CD4-positive, alpha-beta memory T cell (primary cell): ENCODE measurements at regions of chr11 and their contacts with region 1.

Region 1: DNA sequence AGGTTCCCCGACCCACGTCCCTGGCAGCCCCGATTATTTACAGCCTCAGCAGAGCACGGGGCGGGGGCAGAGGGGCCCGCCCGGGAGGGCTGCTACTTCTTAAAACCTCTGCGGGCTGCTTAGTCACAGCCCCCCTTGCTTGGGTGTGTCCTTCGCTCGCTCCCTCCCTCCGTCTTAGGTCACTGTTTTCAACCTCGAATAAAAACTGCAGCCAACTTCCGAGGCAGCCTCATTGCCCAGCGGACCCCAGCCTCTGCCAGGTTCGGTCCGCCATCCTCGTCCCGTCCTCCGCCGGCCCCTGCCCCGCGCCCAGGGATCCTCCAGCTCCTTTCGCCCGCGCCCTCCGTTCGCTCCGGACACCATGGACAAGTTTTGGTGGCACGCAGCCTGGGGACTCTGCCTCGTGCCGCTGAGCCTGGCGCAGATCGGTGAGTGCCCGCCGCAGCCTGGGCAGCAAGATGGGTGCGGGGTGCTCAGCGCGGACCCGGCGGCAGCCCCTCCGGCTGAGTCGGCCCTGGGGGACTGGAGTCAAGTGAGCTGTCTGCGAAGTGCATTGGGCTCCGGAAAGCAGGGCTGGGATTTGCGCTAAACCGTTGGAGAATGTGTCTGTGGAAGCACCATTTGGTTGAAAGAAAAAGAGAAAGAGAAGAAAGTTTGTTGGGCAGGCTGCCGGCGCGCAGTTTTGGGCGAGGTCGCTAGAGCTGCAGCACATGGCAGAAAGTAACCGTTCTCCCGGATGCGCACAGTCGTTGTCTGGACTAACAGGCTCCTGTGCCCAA is at the start of gene CD44:
- DNase-seq: peak; percentile 78 to 93 (median 83)
- H3K4me3 ChIP-seq: peak within 1 kb of the TSS; percentile 84 to 99
- H3K4me3 Mint-ChIP-seq: peak within 1 kb of the TSS; percentile 95 to 99 (median 98)
- H3K27ac ChIP-seq: peak within 1 kb of the TSS; percentile 98
- H3K27ac Mint-ChIP-seq: peak within 1 kb of the TSS; percentile 93 to 99 (median 98)
- H3K4me1 ChIP-seq: peaks cover 42% of the 10 kb centered on the region
- H3K4me1 Mint-ChIP-seq: peaks cover 36 to 64% (median 44%) of the 10 kb centered on the region in 4 donors
- H3K27me3 ChIP-seq: no peaks in the 10 kb centered on the region
- H3K27me3 Mint-ChIP-seq: no peaks in the 10 kb centered on the region
- total RNA-seq, gene CD44: 808 to 809 TPM

Region 2: DNA sequence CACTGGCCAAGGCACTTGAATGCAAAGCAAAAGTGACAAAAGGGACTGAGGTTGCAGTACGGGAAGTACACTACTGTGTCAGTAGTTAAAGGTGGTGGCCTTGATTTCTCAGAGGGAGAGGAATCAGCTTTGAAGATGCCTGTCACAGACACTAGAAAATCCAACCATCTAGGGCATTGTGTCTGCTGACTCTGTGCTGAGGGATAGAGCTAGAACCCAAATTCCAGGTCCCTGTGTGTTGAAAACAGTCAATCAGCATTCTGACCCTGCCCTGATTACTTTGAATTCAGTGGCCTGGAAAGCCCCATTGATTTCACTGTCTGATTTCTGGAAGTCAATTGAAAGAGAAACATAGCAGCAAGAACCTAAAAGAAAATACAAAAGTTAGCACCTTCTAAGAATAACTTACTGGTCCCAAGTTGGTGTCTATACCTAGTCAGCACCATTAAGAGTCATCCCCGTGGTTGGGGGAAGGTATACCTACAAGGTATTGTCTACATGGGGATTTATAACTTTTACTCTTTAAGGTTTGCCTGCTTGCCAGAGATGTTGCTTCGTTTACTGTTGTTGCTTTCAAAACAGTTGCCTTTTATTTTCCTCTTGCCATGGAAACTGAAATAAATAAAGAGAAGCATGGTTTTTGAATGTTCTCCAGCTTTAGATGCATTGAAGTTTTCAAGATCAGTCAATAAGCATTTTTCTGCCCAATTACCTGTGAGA is 125.5 kb before region 1 on chr11:
- CTCF ChIA-PET with region 1: no interaction called
- POLR2A ChIA-PET with region 1: interaction called, 25 read pairs
- intact Hi-C with region 1: loop called (anchors 1 kb)
- DNase-seq: peak; percentile 61 to 87 (median 75)
- H3K4me3 ChIP-seq: no peak overlapping the region
- H3K4me3 Mint-ChIP-seq: peak overlapping the region; percentile 11 to 87 (median 71)
- H3K27ac ChIP-seq: peak overlapping the region; percentile 70
- H3K27ac Mint-ChIP-seq: peak overlapping the region; percentile 93 to 100 (median 97)
- H3K4me1 ChIP-seq: peaks cover 26% of the 10 kb centered on the region
- H3K4me1 Mint-ChIP-seq: peaks cover 23 to 57% (median 37%) of the 10 kb centered on the region in 4 donors
- H3K27me3 ChIP-seq: no peaks in the 10 kb centered on the region
- H3K27me3 Mint-ChIP-seq: no peaks in the 10 kb centered on the region

Region 3: DNA sequence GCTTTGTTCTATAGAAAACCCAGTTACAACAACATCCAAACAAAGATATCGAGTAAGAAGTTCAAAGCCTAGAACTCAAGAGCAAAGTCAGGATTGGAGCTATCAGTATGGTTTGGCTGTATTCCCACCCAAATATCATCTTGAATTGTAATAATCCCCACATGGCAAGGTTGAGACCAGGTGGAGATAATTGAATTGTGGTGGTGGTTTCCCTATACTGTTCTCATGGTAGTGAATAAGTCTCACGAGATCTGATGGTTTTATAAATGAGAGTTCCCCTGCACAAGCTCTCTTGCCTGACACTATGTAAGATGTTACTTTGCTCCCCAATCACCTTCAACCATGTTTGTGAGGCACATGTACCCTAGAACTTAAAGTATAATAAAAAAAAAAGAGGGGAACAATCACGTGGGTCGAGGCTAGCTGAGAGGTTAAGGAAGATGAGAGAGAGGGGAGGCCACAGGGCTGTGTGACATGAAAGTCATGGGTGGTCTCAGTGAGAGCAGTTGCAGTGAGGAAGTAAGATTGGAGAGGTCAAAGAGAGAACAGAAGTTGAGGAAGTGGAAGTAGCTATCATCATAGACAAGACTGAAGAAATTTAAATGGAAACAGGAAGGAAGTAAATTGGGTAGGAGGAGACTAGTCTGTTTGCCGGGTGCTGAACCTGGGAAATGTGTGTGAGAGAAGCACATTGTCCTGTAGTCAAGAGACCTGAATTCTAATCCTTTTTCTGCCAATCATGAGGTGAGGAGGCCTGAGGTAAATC is 80.3 kb before region 1 on chr11:
- CTCF ChIA-PET with region 1: no interaction called
- POLR2A ChIA-PET with region 1: interaction called, 12 read pairs
- intact Hi-C with region 1: no loop called
- DNase-seq: no peak
- H3K4me3 ChIP-seq: no peak overlapping the region
- H3K4me3 Mint-ChIP-seq: peak overlapping the region in 7 of 8 donors; percentile 1 to 71 (median 14)
- H3K27ac ChIP-seq: no peak overlapping the region
- H3K27ac Mint-ChIP-seq: peak overlapping the region; percentile 19 to 90 (median 78)
- H3K4me1 ChIP-seq: peaks cover 40% of the 10 kb centered on the region
- H3K4me1 Mint-ChIP-seq: peaks cover 29 to 46% (median 40%) of the 10 kb centered on the region in 4 donors
- H3K27me3 ChIP-seq: no peaks in the 10 kb centered on the region
- H3K27me3 Mint-ChIP-seq: no peaks in the 10 kb centered on the region

Region 4: DNA sequence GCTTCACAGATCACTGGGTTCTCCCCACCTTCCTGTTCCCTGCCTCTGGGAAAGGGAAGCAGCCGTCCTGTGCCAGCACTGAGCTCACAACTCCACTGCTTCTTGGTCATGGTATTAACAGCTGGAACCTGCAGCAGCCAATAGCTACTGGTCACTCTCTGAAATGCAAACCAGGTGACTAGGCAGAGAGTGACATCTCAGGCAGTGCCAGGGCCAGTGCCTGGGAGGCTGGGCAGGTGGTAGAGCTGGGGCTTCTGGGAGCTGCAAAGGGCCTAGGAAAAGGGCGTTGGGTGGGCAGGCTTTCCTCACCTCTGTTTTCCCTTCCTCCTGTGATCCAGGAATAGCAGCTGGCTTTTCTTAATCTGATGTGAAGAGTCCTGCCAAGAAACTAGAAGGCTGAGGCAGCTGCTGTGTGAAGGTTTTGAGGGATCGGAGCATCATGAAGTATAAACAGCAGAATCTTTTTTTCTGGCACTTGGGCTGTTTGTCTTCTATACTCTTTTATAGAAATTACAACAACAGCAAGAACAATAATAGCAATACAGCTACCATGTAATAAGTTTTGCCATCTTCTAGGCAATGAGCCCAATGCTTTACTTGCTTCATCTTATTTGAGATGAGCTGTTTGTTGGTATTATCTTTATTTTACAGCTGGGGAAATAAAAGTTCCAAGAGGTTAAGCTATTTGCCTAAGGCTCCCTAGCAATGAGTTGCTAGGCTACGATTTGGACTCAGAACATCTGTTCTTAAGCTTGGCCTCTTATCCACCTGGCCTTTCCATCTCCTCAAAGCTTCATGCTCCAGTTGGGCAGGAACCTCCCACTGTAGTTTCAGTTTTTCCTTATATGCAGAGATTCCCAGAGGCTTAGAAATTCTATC is 22.1 kb before region 1 on chr11:
- CTCF ChIA-PET with region 1: no interaction called
- POLR2A ChIA-PET with region 1: interaction called, 63 read pairs
- intact Hi-C with region 1: loop called (anchors 2 kb)
- DNase-seq: no peak
- H3K4me3 ChIP-seq: no peak overlapping the region
- H3K4me3 Mint-ChIP-seq: no peak overlapping the region
- H3K27ac ChIP-seq: no peak overlapping the region
- H3K27ac Mint-ChIP-seq: peak overlapping the region in 1 of 7 donors; percentile 36
- H3K4me1 ChIP-seq: peaks cover 21% of the 10 kb centered on the region
- H3K4me1 Mint-ChIP-seq: peaks cover 24 to 38% (median 30%) of the 10 kb centered on the region in 4 donors
- H3K27me3 ChIP-seq: no peaks in the 10 kb centered on the region
- H3K27me3 Mint-ChIP-seq: no peaks in the 10 kb centered on the region

Region 5: DNA sequence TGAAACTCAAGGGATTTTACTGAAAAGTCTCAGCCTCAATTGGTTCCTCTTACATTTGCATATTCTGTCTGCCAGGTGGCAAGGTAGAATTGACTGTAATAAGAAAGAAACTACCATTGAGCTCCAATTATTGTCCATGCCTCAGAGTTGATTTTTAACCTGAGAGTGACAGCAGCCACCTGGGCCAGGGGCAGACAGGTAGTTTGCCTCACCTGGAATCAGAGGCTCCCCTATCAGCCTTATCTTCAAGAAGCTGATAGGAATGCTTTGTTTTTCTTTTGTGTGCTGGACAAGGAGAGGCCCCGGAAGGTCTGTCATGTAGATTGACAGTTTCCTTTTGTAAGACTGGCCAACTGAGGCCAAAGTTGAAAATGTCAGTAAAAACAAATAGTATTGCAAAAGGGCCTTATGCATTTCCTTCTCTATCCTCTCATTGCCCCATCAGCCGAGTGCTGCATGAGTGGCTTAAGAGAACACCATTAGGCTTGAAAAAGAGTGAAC is 33.9 kb after region 1 on chr11:
- CTCF ChIA-PET with region 1: interaction called, 151 read pairs
- POLR2A ChIA-PET with region 1: interaction called, 1,106 read pairs
- intact Hi-C with region 1: no loop called
- DNase-seq: peak in 1 of 5 donors; percentile 17
- H3K4me3 ChIP-seq: peak overlapping the region in 1 of 2 donors; percentile 3
- H3K4me3 Mint-ChIP-seq: peak overlapping the region in 7 of 8 donors; percentile 63 to 80 (median 71)
- H3K27ac ChIP-seq: peak overlapping the region; percentile 65
- H3K27ac Mint-ChIP-seq: peak overlapping the region; percentile 82 to 100 (median 93)
- H3K4me1 ChIP-seq: peaks cover 96% of the 10 kb centered on the region
- H3K4me1 Mint-ChIP-seq: peaks cover 86 to 95% (median 91%) of the 10 kb centered on the region in 4 donors
- H3K27me3 ChIP-seq: no peaks in the 10 kb centered on the region
- H3K27me3 Mint-ChIP-seq: no peaks in the 10 kb centered on the region

Region 6: DNA sequence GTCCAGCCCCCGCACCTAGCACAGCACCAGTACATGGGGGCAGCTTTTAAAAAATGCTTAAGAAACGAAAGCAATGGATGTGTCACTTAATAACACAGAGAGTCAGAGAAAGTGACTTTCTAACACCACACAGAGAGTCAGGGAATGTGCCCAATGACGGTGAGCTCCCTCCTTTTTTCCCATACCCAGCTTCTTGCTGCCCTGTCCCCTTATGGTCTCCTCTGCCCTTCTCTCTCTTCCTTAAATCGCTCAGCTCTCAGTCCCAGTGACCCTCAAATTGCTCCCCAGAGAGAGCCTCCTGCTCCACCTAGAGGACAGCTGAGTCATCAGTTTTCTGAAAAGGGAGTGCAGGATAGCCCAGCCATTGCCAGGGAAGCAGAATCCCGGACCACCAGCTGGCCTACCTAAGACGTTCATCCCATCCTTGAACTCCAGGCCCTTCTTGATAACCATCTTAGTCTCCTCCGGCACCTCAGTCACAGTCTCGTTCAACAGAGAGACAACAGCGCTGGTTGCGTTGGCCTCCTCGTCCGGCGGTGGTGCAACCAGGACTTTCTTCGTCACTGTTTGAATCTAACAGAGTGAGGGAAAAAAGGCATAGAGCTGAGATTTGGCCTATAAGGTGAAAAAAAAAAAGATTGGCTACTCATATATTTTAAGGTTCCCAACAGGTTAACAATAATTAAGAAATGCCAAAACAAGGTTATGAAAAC is 166.7 kb after region 1 on chr11:
- CTCF ChIA-PET with region 1: interaction called, 14 read pairs
- POLR2A ChIA-PET with region 1: interaction called, 7 read pairs
- intact Hi-C with region 1: loop called (anchors 1 kb)
- DNase-seq: peak in 4 of 5 donors; percentile 35 to 49 (median 44)
- H3K4me3 ChIP-seq: no peak overlapping the region
- H3K4me3 Mint-ChIP-seq: peak overlapping the region; percentile 58 to 85 (median 79)
- H3K27ac ChIP-seq: no peak overlapping the region
- H3K27ac Mint-ChIP-seq: peak overlapping the region; percentile 8 to 95 (median 90)
- H3K4me1 ChIP-seq: peaks cover 24% of the 10 kb centered on the region
- H3K4me1 Mint-ChIP-seq: peaks cover 15 to 29% (median 25%) of the 10 kb centered on the region in 4 donors
- H3K27me3 ChIP-seq: no peaks in the 10 kb centered on the region
- H3K27me3 Mint-ChIP-seq: no peaks in the 10 kb centered on the region